ENCODE measurements at regions of chr12 and their contacts with region 1.

Region 1: GRCh38 chr12:47686645-47687240 is 19.1 kb downstream of the RPAP3 start:
- DNase-seq: peak; percentile 29
- H3K4me3 ChIP-seq: no peak overlapping the region
- CTCF ChIP-seq: peak; percentile 83

Region 2: DNA sequence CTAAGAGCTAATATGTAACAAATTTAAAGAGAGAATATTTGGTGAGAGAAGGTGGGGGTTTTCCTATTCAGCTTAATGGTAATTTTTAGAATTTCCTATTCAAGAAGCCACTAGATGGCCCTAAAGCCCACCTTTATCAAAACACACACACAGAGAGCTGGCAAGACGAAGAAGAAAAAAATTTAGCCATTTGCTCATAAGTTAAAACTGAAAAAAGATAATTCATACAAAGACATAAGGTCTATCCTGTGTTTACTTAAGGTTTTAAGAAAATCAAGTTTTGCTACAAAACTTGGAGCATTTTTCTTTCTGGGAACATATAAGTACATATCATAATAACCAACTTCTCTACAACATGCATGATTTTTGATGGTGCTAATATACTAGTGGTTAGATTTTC is 654.1 kb before region 1 on chr12:
- in situ Hi-C with region 1: loop called (anchors 25 kb)
- DNase-seq: peak; percentile 57
- H3K4me3 ChIP-seq: no peak overlapping the region
- CTCF ChIP-seq: peak; percentile 35

Measured in astrocyte of the cerebellum (primary cell).